CD8-positive, alpha-beta memory T cell (primary cell): ENCODE measurements at regions of chr7 and their contacts with region 1.

Region 1: DNA sequence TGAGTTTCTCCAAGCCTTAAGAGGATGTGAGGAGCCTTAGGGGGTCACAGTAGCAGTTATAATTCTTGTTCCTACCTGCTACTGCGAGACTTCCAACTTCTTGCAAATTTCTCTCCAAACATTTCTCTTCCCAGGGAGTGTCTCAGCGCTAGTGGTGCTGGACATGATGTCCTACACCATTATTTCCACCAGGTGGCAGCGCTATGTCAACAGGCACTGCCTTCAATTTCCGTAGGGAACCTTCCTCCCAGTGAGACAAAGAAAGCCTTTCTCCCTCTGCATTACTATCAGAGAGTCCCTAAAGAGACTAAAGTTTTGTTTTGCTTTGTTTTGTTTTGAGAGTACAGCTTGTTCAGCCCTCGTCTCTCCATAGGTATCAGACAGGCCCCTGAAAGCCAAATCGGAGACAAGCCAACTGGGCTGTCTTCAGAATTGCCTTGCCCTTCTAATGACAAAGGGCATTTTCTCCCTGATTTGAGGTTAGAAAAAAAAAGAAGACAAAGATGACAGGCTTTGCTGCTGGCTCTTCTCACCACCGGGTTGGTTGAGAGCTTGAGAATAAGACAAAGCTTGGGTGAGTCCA is 44.2 kb upstream of the GGCT start:
- DNase-seq: peak in 2 of 5 donors; percentile 20 to 56
- H3K4me3 ChIP-seq: no peak overlapping the region
- H3K4me3 Mint-ChIP-seq: no peak overlapping the region
- H3K27ac ChIP-seq: no peak overlapping the region
- H3K27ac Mint-ChIP-seq: peak overlapping the region in 1 of 8 donors; percentile 37
- H3K4me1 ChIP-seq: no peaks in the 10 kb centered on the region
- H3K4me1 Mint-ChIP-seq: peaks cover 0 to 3% (median 1%) of the 10 kb centered on the region in 3 donors
- H3K27me3 ChIP-seq: no peaks in the 10 kb centered on the region
- H3K27me3 Mint-ChIP-seq: no peaks in the 10 kb centered on the region

Region 2: GRCh38 chr7:30335763-30336487 is 212.9 kb before region 1 on chr7:
- CTCF ChIA-PET with region 1: no interaction called
- POLR2A ChIA-PET with region 1: no interaction called
- DNase-seq: no peak
- H3K4me3 ChIP-seq: no peak overlapping the region
- H3K4me3 Mint-ChIP-seq: no peak overlapping the region
- H3K27ac ChIP-seq: no peak overlapping the region
- H3K27ac Mint-ChIP-seq: peak overlapping the region in 2 of 8 donors; percentile 2 to 9
- H3K4me1 ChIP-seq: peaks cover 8% of the 10 kb centered on the region
- H3K4me1 Mint-ChIP-seq: peaks cover 60 to 91% (median 89%) of the 10 kb centered on the region in 3 donors
- H3K27me3 ChIP-seq: no peaks in the 10 kb centered on the region
- H3K27me3 Mint-ChIP-seq: no peaks in the 10 kb centered on the region

Region 3: DNA sequence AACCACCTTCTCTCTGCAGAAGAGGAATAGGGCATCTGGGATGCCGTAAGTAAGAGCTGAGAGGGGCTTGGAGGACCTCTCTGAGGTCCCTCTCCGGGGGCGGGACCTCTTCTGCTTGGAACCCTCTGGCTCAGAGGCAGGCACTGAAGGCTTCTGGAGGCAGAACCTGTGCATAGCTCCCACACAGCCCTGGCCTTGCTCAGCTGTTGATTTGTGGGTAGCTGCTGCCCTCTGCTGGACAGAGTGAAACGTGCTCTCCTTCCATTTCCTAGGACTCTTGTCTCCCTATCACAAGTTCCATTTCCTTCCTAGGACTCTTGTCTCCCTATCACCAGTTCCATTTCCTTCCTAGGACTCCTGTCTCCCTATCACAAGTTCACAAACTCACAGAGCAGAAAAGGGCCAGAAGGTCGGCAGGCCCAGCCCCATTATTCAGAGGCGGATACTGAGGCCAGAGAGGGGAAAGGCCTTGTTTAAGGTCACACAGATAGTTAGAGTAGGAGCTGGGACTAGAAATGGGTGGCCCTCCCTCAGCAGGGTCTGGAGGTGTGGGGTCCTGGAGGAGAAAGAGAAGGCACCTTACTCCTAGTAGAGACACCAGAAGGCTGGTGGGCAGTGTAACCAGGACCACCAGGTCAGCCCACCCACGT is 15.5 kb after region 1 on chr7:
- CTCF ChIA-PET with region 1: interaction called, 33 read pairs
- POLR2A ChIA-PET with region 1: no interaction called
- DNase-seq: peak; percentile 52 to 78 (median 62)
- H3K4me3 ChIP-seq: no peak overlapping the region
- H3K4me3 Mint-ChIP-seq: no peak overlapping the region
- H3K27ac ChIP-seq: no peak overlapping the region
- H3K27ac Mint-ChIP-seq: peak overlapping the region in 2 of 8 donors; percentile 2 to 53
- H3K4me1 ChIP-seq: no peaks in the 10 kb centered on the region
- H3K4me1 Mint-ChIP-seq: peaks cover 0 to 2% (median 0%) of the 10 kb centered on the region in 3 donors
- H3K27me3 ChIP-seq: no peaks in the 10 kb centered on the region
- H3K27me3 Mint-ChIP-seq: no peaks in the 10 kb centered on the region